ENCODE measurements at regions of chr4 and their contacts with region 1.

Region 1: DNA sequence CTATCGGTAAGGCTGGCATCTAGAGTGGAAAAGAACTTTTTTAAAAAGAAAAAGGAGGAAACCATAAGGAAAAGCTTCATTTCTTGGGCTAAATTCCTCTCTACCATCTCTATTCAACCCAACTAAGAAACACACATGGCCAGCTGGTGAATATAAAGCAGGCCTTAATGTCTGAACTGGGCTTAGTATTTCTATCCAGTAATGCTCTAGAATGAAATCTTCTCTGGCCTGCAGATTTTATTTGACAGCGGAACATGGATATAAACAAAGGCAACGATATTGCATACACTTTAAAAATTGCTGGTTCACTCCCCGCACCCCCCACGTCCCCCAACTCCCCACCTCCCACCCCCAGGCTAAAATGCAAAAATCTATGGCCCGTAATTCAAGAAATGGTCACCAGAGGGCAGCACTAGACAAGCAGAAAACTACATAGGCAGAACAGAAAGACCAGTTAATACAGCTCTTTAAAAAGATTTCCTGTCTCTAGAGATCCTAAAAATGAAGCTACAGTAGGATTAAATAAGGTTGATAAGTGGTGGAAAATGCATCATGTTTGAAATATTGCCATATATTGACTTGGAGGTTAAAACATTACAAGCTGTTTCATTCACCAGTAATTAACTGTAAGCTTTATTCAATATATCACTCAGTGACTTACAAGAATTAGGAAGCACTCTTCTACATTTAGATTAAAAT is 155.2 kb upstream of the GALNT7 start:
- DNase-seq: peak; percentile 64
- ATAC-seq: no peak
- H3K4me3 Mint-ChIP-seq: no peak overlapping the region
- H3K27ac Mint-ChIP-seq: no peak overlapping the region
- H3K4me1 Mint-ChIP-seq: peaks cover 4% of the 10 kb centered on the region
- H3K27me3 Mint-ChIP-seq: peaks cover 7% of the 10 kb centered on the region

Region 2: DNA sequence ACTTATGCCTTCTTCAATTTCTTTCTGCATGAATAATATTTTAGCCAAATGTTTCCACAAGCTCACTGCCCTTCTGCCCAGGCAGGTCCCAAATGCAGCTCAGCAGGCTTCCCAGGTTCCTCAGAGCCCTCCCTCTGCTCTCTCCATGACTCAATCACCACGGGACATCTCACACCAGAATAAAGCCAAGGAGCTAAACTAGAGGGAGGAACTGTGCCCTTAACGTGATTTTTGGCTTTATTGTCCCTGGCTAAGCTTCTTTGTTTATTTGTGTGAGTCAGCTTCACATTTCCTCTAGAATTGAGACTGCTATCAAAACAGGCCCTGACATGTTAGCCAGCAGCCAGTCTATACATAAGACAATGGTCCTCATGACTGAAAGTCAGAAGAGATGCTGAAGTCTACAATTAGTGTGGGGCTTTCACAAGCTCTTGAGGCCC is 31.2 kb before region 1 on chr4:
- CTCF ChIA-PET with region 1: no interaction called
- POLR2A ChIA-PET with region 1: no interaction called
- DNase-seq: no peak
- ATAC-seq: no peak
- H3K4me3 Mint-ChIP-seq: no peak overlapping the region
- H3K27ac Mint-ChIP-seq: no peak overlapping the region
- H3K4me1 Mint-ChIP-seq: no peaks in the 10 kb centered on the region
- H3K27me3 Mint-ChIP-seq: peaks cover 2% of the 10 kb centered on the region

Region 3: DNA sequence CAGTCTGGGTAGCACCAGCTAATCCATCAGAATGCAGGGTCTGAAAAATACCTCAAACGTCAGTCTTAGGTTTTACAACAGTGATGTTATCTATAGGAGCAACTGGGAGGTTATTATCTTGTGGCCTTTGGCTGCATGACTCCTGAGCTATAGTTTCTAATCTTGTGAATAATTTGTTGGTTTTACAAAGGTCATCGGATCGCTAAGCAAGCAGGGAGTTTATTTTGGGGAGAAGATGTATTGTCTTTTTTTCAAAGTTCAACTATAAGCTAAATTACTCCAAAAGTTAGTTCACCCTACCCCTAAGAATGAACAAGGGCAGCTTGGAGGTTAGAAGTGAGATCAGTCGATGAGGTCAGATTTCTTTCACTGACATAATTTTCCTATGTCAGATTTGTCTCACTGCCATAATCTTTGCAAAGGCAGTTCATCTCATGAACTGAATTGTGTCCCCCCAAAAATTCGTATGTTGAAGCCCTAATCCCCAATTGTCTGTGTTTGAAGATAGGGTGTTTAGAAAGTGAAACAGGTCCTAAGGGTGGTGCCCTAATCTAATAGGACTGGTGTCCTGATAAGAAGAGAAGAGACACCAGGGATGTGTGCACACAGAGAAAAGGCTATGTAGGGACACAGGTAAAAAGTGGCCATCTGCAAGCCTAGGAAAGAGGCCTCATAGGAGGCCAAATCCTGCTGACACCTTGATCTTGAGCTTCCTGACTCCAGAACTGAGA is 20.6 kb before region 1 on chr4:
- CTCF ChIA-PET with region 1: interaction called, 12 read pairs
- POLR2A ChIA-PET with region 1: no interaction called
- DNase-seq: no peak
- ATAC-seq: no peak
- H3K4me3 Mint-ChIP-seq: no peak overlapping the region
- H3K27ac Mint-ChIP-seq: no peak overlapping the region
- H3K4me1 Mint-ChIP-seq: no peaks in the 10 kb centered on the region
- H3K27me3 Mint-ChIP-seq: peaks cover 4% of the 10 kb centered on the region

Region 4: GRCh38 chr4:173257732-173258717 is 244.6 kb after region 1 on chr4:
- CTCF ChIA-PET with region 1: interaction called, 66 read pairs
- POLR2A ChIA-PET with region 1: no interaction called
- DNase-seq: peak; percentile 68
- ATAC-seq: peak; percentile 84
- H3K4me3 Mint-ChIP-seq: no peak overlapping the region
- H3K27ac Mint-ChIP-seq: no peak overlapping the region
- H3K4me1 Mint-ChIP-seq: no peaks in the 10 kb centered on the region
- H3K27me3 Mint-ChIP-seq: no peaks in the 10 kb centered on the region

Region 5: DNA sequence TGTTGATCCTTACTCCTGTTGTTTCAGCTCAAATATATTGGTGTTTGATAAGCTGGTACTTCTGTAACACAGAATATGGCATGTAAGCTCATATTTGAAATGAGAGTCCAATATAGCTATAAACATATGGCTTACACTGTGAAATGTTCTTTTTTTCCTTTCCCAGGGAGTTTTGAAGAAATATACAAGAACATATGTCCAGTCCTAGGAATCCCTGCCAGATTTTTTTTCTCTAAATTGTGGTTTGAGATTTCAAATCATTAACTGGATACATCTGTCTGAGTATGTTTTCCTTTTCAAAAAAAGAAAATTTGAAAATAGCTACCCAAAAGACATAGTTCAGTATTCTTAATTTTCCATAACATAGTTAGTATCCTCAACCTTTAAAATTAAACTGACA is 260.6 kb after region 1 on chr4:
- CTCF ChIA-PET with region 1: interaction called, 18 read pairs
- POLR2A ChIA-PET with region 1: no interaction called
- DNase-seq: no peak
- ATAC-seq: no peak
- H3K4me3 Mint-ChIP-seq: no peak overlapping the region
- H3K27ac Mint-ChIP-seq: no peak overlapping the region
- H3K4me1 Mint-ChIP-seq: no peaks in the 10 kb centered on the region
- H3K27me3 Mint-ChIP-seq: no peaks in the 10 kb centered on the region

Region 6: GRCh38 chr4:173288296-173288695 is 274.9 kb after region 1 on chr4:
- CTCF ChIA-PET with region 1: interaction called, 30 read pairs
- POLR2A ChIA-PET with region 1: no interaction called
- DNase-seq: peak; percentile 83
- ATAC-seq: peak; percentile 62
- H3K4me3 Mint-ChIP-seq: peak overlapping the region; percentile 69
- H3K27ac Mint-ChIP-seq: peak overlapping the region; percentile 77
- H3K4me1 Mint-ChIP-seq: peaks cover 16% of the 10 kb centered on the region
- H3K27me3 Mint-ChIP-seq: no peaks in the 10 kb centered on the region